WTC11 (cell line): ENCODE measurements at regions of chr19 and their contacts with region 1.

Region 1: DNA sequence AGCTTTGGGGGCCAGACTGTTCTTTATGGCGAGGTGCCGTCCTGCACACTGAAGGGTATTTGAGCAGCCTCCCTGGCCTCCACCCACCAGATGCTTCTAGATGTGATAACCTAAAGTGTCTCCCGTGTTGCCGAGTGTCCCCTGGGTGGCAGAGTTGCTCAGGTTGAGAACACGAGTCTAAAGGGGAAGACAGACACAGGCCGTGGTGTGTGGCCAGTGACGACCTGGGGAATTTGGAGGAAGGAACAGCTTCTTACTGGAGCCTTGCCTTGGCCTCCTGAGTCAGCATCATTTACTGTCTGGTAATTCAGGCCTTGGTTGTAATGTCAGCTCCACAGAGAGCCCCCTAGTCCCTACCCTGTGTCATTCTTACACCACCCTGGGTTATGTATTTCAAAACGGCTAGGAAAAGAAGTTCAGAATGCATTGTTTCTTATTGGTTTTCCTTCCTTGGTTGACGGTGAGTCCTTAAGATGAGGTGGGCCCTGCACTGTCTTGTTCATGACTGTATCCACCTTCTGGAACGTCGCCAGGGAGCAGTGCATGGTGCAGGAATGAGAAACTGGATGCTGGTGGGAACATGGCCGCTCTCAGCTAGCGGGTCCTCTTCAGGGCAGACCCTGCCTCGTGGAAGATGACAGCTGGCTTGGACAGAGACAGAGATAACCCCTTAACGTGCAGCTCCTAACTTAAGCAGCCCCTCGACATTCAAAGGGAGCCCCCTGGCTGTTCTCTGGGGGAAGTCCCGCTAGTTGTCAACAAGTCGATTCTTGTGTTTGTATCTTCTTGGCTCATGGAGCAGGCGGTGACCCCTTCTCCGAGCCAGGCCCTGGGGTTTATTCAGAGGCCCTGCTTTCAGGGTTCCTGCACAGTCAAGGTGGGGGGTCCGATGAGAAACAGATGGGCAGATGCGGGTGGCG is 7.2 kb downstream of the SIN3B start:
- DNase-seq: peak; percentile 33
- ATAC-seq: peak; percentile 24; the same call in 1 of the 2 replicates
- H3K4me3 Mint-ChIP-seq: no peak overlapping the region
- H3K27ac Mint-ChIP-seq: peak overlapping the region; percentile 71; the same call in 1 of the 2 replicates
- H3K4me1 Mint-ChIP-seq: peaks cover 7% of the 10 kb centered on the region
- H3K27me3 Mint-ChIP-seq: no peaks in the 10 kb centered on the region
- CTCF ChIP-seq: no peak

Region 2: GRCh38 chr19:16778796-16779411 is 57.5 kb before region 1 on chr19:
- CTCF ChIA-PET with region 1: interaction called, 18 read pairs
- POLR2A ChIA-PET with region 1: no interaction called
- DNase-seq: peak; percentile 82
- ATAC-seq: peak; percentile 85
- H3K4me3 Mint-ChIP-seq: no peak overlapping the region
- H3K27ac Mint-ChIP-seq: no peak overlapping the region
- H3K4me1 Mint-ChIP-seq: no peaks in the 10 kb centered on the region
- H3K27me3 Mint-ChIP-seq: peaks cover 1% of the 10 kb centered on the region
- CTCF ChIP-seq: peak; percentile 57

Region 3: DNA sequence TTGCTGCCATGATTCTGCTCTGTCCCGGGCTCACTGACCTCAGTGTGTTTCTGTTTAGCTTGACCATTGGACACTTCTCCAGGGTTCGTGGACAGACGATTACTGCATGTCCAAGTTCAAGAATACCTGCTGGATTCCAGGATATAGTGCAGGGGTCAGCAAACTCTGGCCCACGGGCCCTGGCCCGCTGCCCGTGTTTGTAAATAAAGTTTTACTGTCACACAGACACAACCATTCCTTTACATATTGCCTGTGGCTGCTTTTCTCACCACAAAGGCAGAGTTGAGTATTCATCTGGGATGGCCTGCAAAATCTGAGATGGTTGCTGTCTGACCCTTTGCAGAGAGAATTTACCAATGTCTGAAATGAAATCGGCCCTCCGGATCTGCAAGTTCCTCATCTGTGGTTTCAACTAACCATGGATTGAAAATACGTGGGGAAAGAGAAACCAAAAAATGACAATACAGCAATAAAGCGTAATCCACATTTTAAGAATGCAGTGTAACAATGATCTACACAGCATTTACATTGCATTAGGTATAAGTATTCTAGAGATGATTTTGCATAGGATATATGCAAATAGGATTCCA is 26.5 kb after region 1 on chr19:
- CTCF ChIA-PET with region 1: no interaction called
- POLR2A ChIA-PET with region 1: no interaction called
- DNase-seq: no peak
- ATAC-seq: no peak
- H3K4me3 Mint-ChIP-seq: no peak overlapping the region
- H3K27ac Mint-ChIP-seq: no peak overlapping the region
- H3K4me1 Mint-ChIP-seq: no peaks in the 10 kb centered on the region
- H3K27me3 Mint-ChIP-seq: no peaks in the 10 kb centered on the region
- CTCF ChIP-seq: no peak

Region 4: GRCh38 chr19:16976441-16976840 is 140.1 kb after region 1 on chr19:
- CTCF ChIA-PET with region 1: no interaction called
- POLR2A ChIA-PET with region 1: no interaction called
- DNase-seq: no peak
- ATAC-seq: no peak
- H3K4me3 Mint-ChIP-seq: no peak overlapping the region
- H3K27ac Mint-ChIP-seq: no peak overlapping the region
- H3K4me1 Mint-ChIP-seq: no peaks in the 10 kb centered on the region
- H3K27me3 Mint-ChIP-seq: no peaks in the 10 kb centered on the region
- CTCF ChIP-seq: no peak